ENCODE measurements at regions of chr4 and their contacts with region 1.

Region 1: DNA sequence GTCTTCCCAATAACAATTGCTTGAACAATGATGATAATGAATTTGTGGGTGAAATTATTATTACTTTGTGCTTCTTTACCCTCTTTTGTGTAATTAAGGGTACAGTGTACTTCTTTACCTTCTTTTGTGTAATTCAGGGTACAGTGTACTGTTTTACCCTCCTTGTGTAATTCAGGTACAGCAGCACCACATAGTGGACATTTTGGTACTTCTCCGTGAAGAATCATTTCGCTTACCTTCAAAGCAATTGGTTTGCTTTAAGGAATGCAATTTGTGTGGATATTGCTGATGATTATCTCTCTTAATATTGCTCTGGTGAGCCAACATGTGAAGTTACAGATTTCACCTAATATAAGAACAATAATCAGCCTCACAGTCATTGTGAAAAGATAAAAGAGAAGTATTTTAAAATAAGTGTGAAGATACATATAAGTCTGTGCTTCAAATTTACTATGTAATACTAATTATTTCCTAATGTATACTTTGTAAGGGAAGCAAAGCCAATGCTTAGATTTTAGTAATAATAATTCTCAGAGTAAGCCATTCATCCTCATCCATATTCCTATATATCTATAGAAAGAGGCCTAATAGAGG is 27.2 kb upstream of the SEC24B start:
- DNase-seq: peak; percentile 21 to 57
- ATAC-seq: peak; percentile 83; a peak in 5 of 6 replicates
- H3K4me3 ChIP-seq: no peak overlapping the region
- H3K27ac ChIP-seq: no peak overlapping the region
- H3K4me1 ChIP-seq: no peaks in the 10 kb centered on the region
- CTCF ChIP-seq: peak; percentile 63
- EP300 ChIP-seq: no peak
- POLR2A ChIP-seq: no peak
- RAD21 ChIP-seq: peak; percentile 69 to 73

Region 2: DNA sequence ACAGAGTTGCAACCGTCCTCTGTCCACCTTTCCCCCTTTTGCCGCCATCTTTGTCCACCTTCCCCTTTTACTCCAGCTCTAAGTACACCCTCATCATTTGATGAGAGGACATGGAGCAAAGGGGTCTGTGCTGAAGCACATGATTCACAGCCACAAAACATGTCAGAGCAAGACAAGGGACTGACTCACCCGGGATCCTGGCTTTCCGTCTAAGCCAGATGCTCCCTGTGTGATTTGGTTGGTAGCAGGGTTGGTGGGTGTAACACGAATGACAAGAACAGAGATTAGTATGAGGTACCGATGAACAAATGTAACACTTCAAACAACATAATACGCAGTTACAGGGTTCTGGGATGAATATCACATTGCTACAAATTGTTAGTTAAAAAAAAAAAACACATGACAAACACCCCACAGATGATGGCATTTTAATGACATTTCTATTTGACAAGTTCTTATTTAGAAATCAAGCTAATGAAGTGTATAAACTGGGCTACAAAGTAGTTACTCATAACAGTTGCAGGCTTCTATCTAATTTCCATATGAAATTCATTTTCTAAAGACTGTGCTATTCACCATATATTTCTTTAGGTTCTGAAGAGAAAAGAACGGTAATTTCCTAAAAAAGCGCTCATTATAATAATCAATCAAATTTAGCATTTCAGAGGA is 572.1 kb before region 1 on chr4:
- CTCF ChIA-PET with region 1: interaction called, 10 read pairs
- POLR2A ChIA-PET with region 1: no interaction called
- DNase-seq: no peak
- ATAC-seq: no peak
- H3K4me3 ChIP-seq: no peak overlapping the region
- H3K27ac ChIP-seq: no peak overlapping the region
- H3K4me1 ChIP-seq: no peaks in the 10 kb centered on the region
- CTCF ChIP-seq: no peak
- EP300 ChIP-seq: no peak
- POLR2A ChIP-seq: no peak
- RAD21 ChIP-seq: no peak

Region 3: GRCh38 chr4:109352941-109353340 is 53.5 kb before region 1 on chr4:
- CTCF ChIA-PET with region 1: no interaction called
- POLR2A ChIA-PET with region 1: no interaction called
- DNase-seq: no peak
- ATAC-seq: no peak
- H3K4me3 ChIP-seq: no peak overlapping the region
- H3K27ac ChIP-seq: no peak overlapping the region
- H3K4me1 ChIP-seq: no peaks in the 10 kb centered on the region
- CTCF ChIP-seq: no peak
- EP300 ChIP-seq: no peak
- POLR2A ChIP-seq: no peak
- RAD21 ChIP-seq: no peak